ENCODE measurements at regions of chr12 and their contacts with region 1.

Region 1: DNA sequence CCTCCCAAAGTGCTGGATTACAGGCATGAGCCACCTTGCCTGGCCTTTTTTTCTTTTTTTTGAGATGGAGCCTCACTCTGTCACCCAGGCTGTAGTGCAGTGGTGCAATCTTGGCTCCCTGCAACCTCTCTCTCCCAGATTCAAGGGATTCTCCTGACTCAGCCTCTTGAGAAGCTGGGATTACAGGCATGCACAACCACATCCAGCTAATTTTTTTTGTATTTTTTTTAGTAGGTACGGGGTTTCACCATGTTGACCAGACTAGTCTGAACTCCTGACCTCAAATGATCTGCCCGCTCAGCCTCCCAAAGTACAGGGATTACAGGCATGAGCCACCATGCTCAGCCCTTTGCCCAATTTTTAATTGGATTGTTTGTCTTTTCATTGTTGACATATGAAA is 58.0 kb downstream of the SINHCAF start:
- DNase-seq: no peak
- ATAC-seq: no peak
- H3K4me3 Mint-ChIP-seq: no peak overlapping the region
- H3K27ac Mint-ChIP-seq: no peak overlapping the region
- H3K4me1 Mint-ChIP-seq: peaks cover 19% of the 10 kb centered on the region
- H3K27me3 Mint-ChIP-seq: no peaks in the 10 kb centered on the region
- CTCF ChIP-seq: no peak

Region 2: GRCh38 chr12:30862486-30862885 is 405.5 kb before region 1 on chr12:
- CTCF ChIA-PET with region 1: no interaction called
- POLR2A ChIA-PET with region 1: no interaction called
- DNase-seq: no peak
- ATAC-seq: no peak
- H3K4me3 Mint-ChIP-seq: no peak overlapping the region
- H3K27ac Mint-ChIP-seq: no peak overlapping the region
- H3K4me1 Mint-ChIP-seq: peaks cover 13% of the 10 kb centered on the region
- H3K27me3 Mint-ChIP-seq: peaks cover 18% of the 10 kb centered on the region
- CTCF ChIP-seq: no peak

Region 3: DNA sequence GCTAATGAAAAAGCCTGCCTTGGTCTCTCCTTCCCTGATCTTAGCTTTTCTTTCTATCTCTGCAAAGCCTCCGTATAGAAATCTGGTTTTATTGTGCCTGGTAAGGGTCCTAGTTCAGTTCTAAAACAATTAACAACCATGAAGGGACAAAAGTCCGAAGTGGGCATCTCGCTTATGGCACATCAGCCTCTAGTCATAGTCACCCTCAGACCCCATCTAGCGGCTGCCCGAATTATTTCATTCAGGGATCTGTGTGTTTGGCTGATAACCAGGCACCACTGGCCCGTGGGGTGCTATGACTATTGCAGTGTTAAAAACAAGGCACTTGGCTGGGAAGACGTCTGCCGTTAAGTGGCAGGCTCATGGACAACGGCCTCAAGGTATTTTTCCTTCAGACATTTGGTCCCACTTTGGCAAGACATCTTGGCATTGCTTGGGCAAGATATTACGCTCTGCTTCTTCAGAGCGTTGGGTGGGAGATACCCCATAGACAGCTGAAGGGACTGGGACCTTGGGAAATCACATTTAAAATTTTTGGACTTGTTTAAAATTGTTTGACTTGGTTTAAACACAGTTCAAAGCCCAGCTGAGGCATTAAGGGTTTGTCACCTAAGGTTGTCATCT is 29.1 kb before region 1 on chr12:
- CTCF ChIA-PET with region 1: interaction called, 20 read pairs
- POLR2A ChIA-PET with region 1: no interaction called
- DNase-seq: peak; percentile 76
- ATAC-seq: peak; percentile 86
- H3K4me3 Mint-ChIP-seq: no peak overlapping the region
- H3K27ac Mint-ChIP-seq: no peak overlapping the region
- H3K4me1 Mint-ChIP-seq: peaks cover 9% of the 10 kb centered on the region; the same call in 1 of the 2 replicates
- H3K27me3 Mint-ChIP-seq: peaks cover 4% of the 10 kb centered on the region; the same call in 1 of the 2 replicates
- CTCF ChIP-seq: peak; percentile 43

Region 4: DNA sequence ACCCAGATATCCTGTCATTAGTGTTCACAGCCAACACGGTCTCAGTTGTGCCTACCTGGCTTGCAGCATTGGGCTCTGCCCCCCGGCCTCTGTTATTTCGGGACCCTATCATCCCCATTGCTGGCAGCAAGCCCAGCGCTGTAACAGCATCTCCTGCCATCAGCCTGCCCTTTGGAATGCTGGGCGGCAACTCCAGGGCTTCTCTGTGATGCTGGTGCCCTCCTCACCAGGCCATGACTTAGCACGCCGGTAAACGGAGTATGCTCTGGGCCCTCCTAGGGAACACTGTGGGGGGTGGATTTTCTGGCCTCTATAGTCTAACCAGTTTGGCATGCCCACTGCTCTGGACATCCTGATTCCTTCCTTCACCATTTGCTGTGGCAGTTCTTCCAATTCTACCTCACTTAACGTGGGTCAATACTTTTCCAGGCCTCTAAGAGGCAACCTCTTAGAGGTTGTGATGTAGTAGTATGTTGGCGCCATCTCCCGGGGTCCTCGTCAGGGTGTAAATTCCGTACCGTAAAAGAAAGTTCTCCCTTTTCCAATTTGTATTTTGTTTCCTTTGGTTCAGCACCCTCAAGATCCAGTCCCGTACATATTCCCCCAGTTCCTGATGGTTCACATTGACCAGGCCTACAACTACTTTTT is 22.0 kb before region 1 on chr12:
- CTCF ChIA-PET with region 1: interaction called, 119 read pairs
- POLR2A ChIA-PET with region 1: no interaction called
- DNase-seq: no peak
- ATAC-seq: peak; percentile 88
- H3K4me3 Mint-ChIP-seq: no peak overlapping the region
- H3K27ac Mint-ChIP-seq: peak overlapping the region; percentile 25; the same call in 1 of the 2 replicates
- H3K4me1 Mint-ChIP-seq: peaks cover 12% of the 10 kb centered on the region
- H3K27me3 Mint-ChIP-seq: no peaks in the 10 kb centered on the region
- CTCF ChIP-seq: no peak

Region 5: DNA sequence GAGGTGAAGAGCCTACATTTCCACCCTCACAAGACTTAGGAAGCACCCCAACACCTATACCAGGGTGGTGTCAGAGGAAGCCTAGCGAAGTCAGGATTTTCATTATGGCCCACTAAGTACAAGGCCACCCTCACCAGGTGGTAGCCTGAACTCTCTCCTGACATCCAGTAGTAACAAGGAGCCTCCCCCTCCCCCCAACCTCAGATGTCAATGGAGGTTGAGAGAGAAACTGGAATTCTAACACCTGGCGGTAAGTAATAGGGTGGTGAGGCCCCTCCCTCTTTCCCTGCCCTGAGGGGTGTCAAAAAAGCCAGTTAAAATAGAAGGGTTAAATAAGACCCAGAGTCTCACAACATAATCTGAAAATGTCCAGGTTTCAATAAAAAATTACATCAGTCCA is 20.4 kb after region 1 on chr12:
- CTCF ChIA-PET with region 1: interaction called, 14 read pairs
- POLR2A ChIA-PET with region 1: no interaction called
- DNase-seq: peak; percentile 44
- ATAC-seq: peak; percentile 66
- H3K4me3 Mint-ChIP-seq: no peak overlapping the region
- H3K27ac Mint-ChIP-seq: peak overlapping the region; percentile 92
- H3K4me1 Mint-ChIP-seq: peaks cover 20% of the 10 kb centered on the region
- H3K27me3 Mint-ChIP-seq: no peaks in the 10 kb centered on the region
- CTCF ChIP-seq: no peak

Region 6: GRCh38 chr12:31297572-31298512 is 29.9 kb after region 1 on chr12:
- CTCF ChIA-PET with region 1: interaction called, 14 read pairs
- POLR2A ChIA-PET with region 1: no interaction called
- DNase-seq: no peak
- ATAC-seq: no peak
- H3K4me3 Mint-ChIP-seq: no peak overlapping the region
- H3K27ac Mint-ChIP-seq: peak overlapping the region; percentile 90
- H3K4me1 Mint-ChIP-seq: peaks cover 44% of the 10 kb centered on the region
- H3K27me3 Mint-ChIP-seq: no peaks in the 10 kb centered on the region
- CTCF ChIP-seq: no peak

Region 7: GRCh38 chr12:31387466-31387865 is 119.5 kb after region 1 on chr12:
- CTCF ChIA-PET with region 1: interaction called, 10 read pairs
- POLR2A ChIA-PET with region 1: interaction called, 4 read pairs
- DNase-seq: no peak
- ATAC-seq: peak; percentile 7
- H3K4me3 Mint-ChIP-seq: peak overlapping the region; percentile 69
- H3K27ac Mint-ChIP-seq: peak overlapping the region; percentile 99
- H3K4me1 Mint-ChIP-seq: peaks cover 79% of the 10 kb centered on the region
- H3K27me3 Mint-ChIP-seq: no peaks in the 10 kb centered on the region
- CTCF ChIP-seq: no peak